ENCODE measurements at regions of chr1 and their contacts with region 1.

Region 1: DNA sequence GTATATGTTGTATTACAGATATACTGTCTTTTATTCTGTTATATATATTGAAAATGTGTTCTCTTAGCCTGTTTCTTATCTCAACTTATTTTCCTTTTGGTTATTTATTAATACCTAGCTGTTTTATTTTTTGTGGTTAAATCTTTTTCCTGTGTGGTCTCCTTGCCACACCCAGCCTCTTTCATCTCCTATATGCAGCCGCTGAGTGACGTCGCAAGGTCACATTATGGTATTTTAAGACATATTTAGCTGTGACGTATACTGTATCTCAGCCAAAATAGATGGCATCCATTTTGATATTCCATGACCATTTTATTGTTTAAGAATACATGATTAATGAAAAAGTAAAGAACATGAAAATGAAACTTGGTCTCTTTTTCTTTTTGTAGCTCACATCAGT is 29.1 kb downstream of the CENPF start:
- DNase-seq: no peak
- H3K4me3 Mint-ChIP-seq: no peak overlapping the region
- H3K27ac Mint-ChIP-seq: peak overlapping the region; percentile 64
- H3K4me1 Mint-ChIP-seq: peaks cover 29% of the 10 kb centered on the region
- H3K27me3 Mint-ChIP-seq: no peaks in the 10 kb centered on the region

Region 2: DNA sequence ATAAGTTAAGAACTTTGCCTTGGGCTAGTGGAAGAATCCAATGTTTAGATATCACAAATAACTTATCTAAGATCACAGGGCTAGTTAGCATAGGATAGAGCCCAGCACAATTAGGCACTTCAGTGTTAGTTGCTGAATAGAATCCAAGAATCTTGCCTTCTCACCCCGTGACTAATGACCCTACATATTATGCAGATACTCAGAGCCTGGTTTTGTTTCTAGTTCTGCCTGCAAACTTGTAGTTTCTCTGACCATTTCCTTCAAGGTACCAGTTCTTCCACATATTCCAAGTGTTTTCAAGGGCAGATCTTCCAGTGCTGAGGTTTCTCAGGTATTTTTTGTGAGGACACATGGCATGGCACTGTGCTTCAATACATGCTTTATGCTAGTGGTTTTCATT is 689.7 kb after region 1 on chr1:
- intact Hi-C with region 1: no loop called
- DNase-seq: no peak
- H3K4me3 Mint-ChIP-seq: no peak overlapping the region
- H3K27ac Mint-ChIP-seq: no peak overlapping the region
- H3K4me1 Mint-ChIP-seq: no peaks in the 10 kb centered on the region
- H3K27me3 Mint-ChIP-seq: no peaks in the 10 kb centered on the region

Region 3: GRCh38 chr1:215526553-215527151 is 894.6 kb after region 1 on chr1:
- intact Hi-C with region 1: loop called (anchors 1 kb)
- DNase-seq: no peak
- H3K4me3 Mint-ChIP-seq: no peak overlapping the region
- H3K27ac Mint-ChIP-seq: no peak overlapping the region
- H3K4me1 Mint-ChIP-seq: no peaks in the 10 kb centered on the region
- H3K27me3 Mint-ChIP-seq: peaks cover 2% of the 10 kb centered on the region

Region 4: GRCh38 chr1:215606564-215607168 is 974.6 kb after region 1 on chr1:
- intact Hi-C with region 1: loop called (anchors 2 kb)
- DNase-seq: no peak
- H3K4me3 Mint-ChIP-seq: no peak overlapping the region
- H3K27ac Mint-ChIP-seq: no peak overlapping the region
- H3K4me1 Mint-ChIP-seq: no peaks in the 10 kb centered on the region
- H3K27me3 Mint-ChIP-seq: no peaks in the 10 kb centered on the region

Region 5: DNA sequence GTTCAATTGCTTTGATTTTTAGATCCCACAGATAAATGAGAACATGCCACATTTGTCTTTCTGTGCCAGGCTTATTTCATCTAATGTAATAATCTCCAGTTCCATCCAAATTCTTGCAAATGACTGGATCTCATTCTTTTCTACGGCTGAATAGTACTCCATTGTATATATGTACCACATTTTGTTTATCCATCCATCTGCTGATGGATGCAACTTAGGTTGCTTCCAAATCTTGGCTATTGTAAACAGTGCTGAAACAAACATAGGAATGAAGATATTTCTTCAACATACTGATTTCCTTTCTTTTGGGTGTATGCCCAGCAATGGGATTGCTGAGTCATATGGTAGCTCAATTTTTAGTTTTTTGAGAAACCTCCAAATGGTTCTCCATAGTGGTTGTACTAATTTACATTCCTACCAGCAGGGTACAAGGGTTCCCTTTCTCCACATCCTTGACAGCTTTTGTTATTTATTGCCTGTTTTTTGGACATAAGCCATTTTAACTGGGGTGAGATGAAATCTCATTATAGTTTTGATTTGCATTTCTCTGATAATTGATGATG is 1279.4 kb after region 1 on chr1:
- intact Hi-C with region 1: no loop called
- DNase-seq: no peak
- H3K4me3 Mint-ChIP-seq: no peak overlapping the region
- H3K27ac Mint-ChIP-seq: no peak overlapping the region
- H3K4me1 Mint-ChIP-seq: no peaks in the 10 kb centered on the region
- H3K27me3 Mint-ChIP-seq: no peaks in the 10 kb centered on the region